Keratinocyte (primary cell): ENCODE measurements at regions of chr2 and their contacts with region 1.

Region 1: DNA sequence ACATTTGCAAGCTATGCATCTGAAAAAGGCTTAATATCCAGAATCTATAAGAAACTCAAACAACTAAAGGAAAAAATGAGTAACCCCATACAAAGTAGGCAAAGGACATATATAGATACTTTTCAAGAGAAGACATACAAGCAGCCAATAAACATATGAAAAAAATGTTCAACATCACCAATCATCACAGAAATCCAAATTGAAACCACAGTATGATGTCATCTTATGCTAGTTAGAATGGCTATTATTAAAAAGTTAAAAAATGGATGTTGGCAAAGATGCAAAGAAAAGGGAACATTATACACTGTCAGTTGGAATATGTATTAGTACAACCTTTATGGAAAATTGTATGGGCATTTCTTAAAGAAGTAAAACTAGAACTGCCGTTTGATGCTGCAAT is 125.3 kb downstream of the NYAP2 start:
- DNase-seq: no peak
- H3K4me3 ChIP-seq: no peak overlapping the region
- H3K27ac ChIP-seq: no peak overlapping the region
- H3K4me1 ChIP-seq: no peaks in the 10 kb centered on the region
- H3K27me3 ChIP-seq: no peaks in the 10 kb centered on the region
- CTCF ChIP-seq: no peak

Region 2: GRCh38 chr2:225556461-225556860 is 31.6 kb after region 1 on chr2:
- dilution Hi-C with region 1: loop called (anchors 5 kb)
- DNase-seq: no peak
- H3K4me3 ChIP-seq: no peak overlapping the region
- H3K27ac ChIP-seq: no peak overlapping the region
- H3K4me1 ChIP-seq: no peaks in the 10 kb centered on the region
- H3K27me3 ChIP-seq: no peaks in the 10 kb centered on the region
- CTCF ChIP-seq: peak in 1 of 3 experiments; percentile 5